MCF 10A (cell line): ENCODE measurements at regions of chr6 and their contacts with region 1.

Region 1: DNA sequence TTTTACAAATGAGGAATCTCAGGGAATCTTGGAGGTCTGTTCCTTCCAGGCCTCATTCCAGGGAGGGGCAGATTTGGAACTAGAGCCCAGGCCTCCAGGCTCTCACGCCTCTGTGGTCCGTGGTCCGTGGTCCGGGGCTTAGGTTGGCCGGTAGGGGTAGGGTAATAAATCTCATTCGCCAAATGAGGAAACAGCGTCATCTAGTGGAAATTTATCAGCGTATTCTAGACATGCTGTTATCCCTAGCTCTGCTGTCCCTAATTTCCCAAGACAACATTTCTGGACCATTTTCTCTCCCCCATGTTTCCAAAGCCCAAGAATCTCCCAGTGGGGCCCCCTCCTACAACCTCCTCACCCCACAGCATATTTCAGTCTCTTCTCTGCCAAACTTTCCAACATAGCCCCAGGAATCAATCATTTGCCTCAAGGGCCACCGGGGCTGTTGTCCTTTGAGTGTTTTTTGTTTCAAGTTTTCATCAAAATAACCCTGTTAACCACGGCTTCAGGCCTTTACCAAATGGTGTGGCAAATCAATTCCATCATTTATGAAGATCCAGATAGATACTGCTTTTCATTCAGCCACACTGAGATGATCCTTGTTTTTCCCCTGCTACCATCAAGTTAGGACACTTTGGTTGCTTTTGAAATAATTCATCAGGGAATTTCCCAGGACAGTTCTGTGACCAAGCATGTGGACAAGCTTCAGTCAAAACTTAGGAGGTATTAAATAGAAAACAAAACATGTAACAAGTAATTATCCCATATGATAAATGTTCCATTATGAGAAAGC is 126.8 kb downstream of the ALDH8A1 start:
- DNase-seq: peak; percentile 88
- H3K4me3 Mint-ChIP-seq: no peak overlapping the region
- H3K27ac Mint-ChIP-seq: no peak overlapping the region
- H3K4me1 Mint-ChIP-seq: peaks cover 27% of the 10 kb centered on the region
- H3K27me3 Mint-ChIP-seq: no peaks in the 10 kb centered on the region
- CTCF ChIP-seq: peak; percentile 82

Region 2: DNA sequence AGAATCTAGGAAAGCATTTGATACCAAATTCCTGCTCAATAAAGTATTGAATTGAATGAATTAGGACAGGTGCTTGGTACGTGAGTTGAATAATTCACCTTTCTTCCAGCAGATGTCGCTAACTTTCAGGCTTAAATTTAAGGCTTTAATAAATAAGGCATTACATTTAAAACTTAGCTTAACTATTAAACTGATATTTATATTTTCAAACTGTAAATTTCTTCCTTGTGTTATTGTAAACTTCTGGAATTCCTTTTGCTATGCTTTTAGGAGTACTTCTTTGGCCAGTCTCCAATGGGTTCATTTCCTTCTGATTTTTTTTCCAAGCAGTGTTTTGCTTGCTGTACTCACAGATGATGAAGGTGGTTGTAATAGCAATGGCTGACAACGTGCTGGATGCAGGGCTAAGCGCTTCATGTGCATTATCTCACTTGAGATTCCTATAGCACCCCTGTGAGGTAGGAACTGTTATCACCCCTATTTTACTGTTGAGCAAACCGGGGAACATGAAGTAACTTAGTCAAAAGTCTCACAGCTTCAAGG is 699.4 kb before region 1 on chr6:
- CTCF ChIA-PET with region 1: interaction called, 15 read pairs
- POLR2A ChIA-PET with region 1: interaction called, 6 read pairs
- intact Hi-C with region 1: no loop called
- DNase-seq: peak; percentile 75
- H3K4me3 Mint-ChIP-seq: no peak overlapping the region
- H3K27ac Mint-ChIP-seq: no peak overlapping the region
- H3K4me1 Mint-ChIP-seq: peaks cover 5% of the 10 kb centered on the region
- H3K27me3 Mint-ChIP-seq: no peaks in the 10 kb centered on the region
- CTCF ChIP-seq: peak; percentile 35

Region 3: DNA sequence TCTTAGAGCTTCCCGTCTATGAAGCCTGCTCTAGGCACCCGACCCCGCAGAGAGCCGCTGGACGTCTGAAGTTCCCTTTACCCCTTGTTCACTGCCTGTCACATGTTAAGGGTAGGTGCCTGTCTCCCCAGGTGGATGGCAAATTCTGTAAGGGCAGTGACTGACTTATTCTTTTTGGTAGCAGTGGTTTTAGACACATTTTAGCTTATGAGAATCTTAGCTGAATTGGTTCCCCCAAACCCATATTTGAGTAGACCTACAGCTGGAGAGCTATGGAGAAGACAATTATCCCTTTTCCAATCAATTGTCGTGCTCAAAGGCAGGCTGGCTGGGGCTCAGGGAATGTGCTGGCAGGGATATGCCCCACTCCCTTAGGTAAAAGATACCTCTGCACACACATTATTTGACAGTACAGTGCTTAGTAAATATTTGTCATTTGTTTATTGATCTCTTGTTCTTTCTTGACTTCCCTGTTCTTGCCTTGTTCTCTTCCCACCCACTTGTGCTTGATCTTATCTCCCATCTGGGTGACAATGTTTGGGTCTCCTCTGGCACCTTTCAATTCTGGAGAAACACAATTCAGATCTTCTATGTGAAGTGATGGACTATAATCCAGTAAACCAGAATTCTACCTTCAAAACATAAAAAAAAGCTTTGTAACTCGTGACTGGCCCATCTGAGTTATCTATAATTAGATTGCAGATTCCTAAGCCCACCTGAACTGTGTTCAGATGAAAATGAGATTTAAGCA is 656.4 kb before region 1 on chr6:
- CTCF ChIA-PET with region 1: interaction called, 28 read pairs
- POLR2A ChIA-PET with region 1: interaction called, 14 read pairs
- intact Hi-C with region 1: no loop called
- DNase-seq: no peak
- H3K4me3 Mint-ChIP-seq: no peak overlapping the region
- H3K27ac Mint-ChIP-seq: no peak overlapping the region
- H3K4me1 Mint-ChIP-seq: peaks cover 19% of the 10 kb centered on the region
- H3K27me3 Mint-ChIP-seq: no peaks in the 10 kb centered on the region
- CTCF ChIP-seq: no peak

Region 4: DNA sequence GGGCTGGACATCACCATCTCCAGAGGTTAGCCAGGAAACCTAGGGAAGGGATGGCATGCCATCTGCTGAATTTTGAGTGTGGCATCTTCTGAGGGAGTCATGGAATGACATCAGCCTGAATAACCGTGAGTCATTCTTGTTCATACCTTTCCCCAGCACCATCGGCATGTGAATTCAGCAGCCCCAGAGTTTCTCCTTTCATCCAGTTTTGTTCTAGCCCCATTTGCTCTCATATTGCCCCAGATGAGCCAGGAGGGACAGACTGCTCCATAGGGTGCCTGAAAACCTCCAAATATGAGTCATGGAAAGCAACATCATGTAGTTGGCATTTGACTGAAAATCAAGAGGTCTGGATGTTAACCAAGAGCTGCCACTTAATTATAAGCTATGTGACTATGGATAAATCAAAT is 286.0 kb before region 1 on chr6:
- CTCF ChIA-PET with region 1: interaction called, 4 read pairs
- POLR2A ChIA-PET with region 1: no interaction called
- intact Hi-C with region 1: loop called (anchors 1 kb)
- DNase-seq: peak; percentile 98
- H3K4me3 Mint-ChIP-seq: no peak overlapping the region
- H3K27ac Mint-ChIP-seq: peak overlapping the region; percentile 65
- H3K4me1 Mint-ChIP-seq: peaks cover 32% of the 10 kb centered on the region
- H3K27me3 Mint-ChIP-seq: no peaks in the 10 kb centered on the region
- CTCF ChIP-seq: no peak

Region 5: DNA sequence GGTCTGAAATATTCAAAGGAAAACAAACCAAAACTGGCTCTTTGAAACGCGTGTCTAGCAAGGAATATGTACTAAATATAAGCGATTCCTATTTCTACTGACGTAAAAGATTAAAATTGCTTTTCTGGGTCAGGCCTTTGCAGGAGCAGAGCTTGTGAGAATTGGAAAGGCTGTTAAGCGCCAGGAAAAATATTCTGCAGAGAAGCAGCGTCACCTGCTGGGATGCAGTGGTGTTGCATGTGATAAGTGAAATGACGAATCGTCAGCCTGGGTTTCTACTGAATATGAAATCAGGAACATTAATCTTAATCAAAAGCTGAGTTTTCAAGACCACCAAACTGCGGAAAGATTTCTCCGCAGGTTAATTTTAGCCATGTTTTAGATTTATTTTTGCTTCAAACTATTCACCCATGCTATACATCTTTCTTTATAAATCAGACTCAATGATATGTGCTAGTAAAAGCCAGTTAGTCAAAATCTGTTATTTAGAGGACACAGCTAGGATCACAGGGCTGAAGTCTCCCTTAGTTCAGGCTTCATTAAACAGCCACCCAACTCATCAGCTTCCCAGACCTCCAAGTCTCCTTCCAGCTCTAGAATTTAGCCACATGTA is 59.4 kb after region 1 on chr6:
- CTCF ChIA-PET with region 1: interaction called, 147 read pairs
- POLR2A ChIA-PET with region 1: interaction called, 41 read pairs
- intact Hi-C with region 1: loop called (anchors 1 kb)
- DNase-seq: peak; percentile 82
- H3K4me3 Mint-ChIP-seq: no peak overlapping the region
- H3K27ac Mint-ChIP-seq: no peak overlapping the region
- H3K4me1 Mint-ChIP-seq: peaks cover 16% of the 10 kb centered on the region
- H3K27me3 Mint-ChIP-seq: no peaks in the 10 kb centered on the region
- CTCF ChIP-seq: peak; percentile 94